ENCODE measurements at regions of chr12 and their contacts with region 1.

Region 1: DNA sequence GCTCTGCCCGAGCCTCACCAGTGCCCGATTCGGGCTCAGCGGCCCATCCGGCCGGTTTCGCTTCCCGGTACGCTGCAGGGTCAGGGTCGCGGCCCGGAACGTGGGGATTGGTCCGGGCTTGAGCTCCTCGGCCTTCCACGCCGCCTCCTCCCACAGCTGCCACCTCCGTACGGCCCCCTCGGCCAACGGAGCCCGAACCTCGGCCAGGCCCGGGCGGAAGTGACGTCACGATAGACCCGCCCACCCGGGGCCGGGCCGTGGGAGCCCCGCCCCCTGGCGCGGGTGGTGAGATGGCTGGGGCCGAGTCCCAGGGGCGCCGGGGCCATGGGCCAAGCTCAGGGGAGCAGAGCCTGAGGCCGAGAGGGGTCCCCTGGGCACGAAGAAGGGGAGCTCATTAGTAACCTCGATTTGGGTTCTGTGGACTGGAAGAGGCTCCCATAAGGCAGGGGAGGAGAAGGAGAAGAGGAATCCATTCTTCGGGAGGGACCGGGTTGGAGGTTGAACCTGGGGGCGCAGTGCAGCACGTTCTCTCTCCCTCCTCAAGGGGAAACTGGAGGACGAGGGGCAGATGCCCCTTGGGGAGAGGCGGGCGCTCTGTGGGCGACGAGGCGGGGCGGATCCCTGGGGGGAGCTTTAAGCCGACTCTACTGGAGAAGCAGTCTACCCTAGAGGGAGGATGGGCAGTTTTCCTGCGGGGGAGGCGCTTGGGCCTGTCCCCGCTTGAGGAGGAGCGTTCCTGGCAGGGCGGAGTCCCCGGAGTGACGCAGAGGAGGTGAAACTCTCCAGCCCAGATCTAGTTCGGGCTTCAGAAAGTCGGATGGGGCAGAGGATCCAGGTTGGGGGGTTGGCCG is at the start of gene MLF2:
- H3K4me3 Mint-ChIP-seq: peak within 1 kb of the TSS; percentile 99
- H3K27ac Mint-ChIP-seq: peak within 1 kb of the TSS; percentile 100
- H3K4me1 Mint-ChIP-seq: peaks cover 54% of the 10 kb centered on the region
- H3K27me3 Mint-ChIP-seq: peaks cover 7% of the 10 kb centered on the region

Region 2: DNA sequence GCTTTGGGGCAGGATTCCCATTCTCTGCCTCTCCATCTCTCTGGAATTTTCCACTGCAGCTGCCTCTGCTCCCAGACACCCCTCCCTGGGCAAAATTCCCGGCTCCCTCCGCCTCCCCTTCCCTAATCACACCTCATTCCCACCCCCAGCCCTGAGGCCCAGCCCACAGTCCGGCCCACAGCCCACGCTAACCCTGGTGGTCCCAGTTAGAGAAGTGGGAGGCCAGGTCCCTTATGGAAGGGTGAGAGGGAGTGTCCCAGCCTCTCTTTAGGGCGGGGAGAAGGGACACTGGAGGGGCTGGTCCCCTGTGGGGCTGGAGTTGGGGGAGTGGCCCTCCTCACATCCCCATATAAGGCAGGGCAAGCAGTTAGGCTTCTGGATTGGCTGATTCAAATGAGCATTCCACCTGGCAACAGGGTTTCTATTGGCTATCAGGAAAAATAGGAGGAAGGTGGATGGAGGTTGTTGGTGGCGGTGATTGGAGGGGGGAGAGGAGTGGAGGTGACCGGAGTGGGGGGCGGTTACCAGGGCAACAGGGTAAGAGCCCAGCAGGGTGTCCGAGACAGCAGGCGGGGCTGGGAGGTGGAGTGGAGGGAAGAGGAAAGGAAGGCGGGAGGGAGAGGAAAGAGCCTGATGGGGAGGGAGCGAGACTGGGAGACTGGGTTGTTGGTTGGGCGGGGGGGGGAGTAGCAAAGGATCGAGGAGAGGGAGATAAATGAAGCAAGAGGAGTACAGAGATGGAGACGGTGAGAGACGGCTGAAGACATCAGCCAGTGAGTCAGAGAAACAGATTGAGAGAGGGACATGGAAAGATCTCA is 11.1 kb after region 1 on chr12:
- intact Hi-C with region 1: loop called (anchors 1 kb)
- H3K4me3 Mint-ChIP-seq: peak overlapping the region; percentile 57
- H3K27ac Mint-ChIP-seq: peak overlapping the region; percentile 16
- H3K4me1 Mint-ChIP-seq: peaks cover 48% of the 10 kb centered on the region
- H3K27me3 Mint-ChIP-seq: peaks cover 52% of the 10 kb centered on the region

Region 3: GRCh38 chr12:6778574-6779550 is 25.7 kb after region 1 on chr12:
- intact Hi-C with region 1: loop called (anchors 1 kb)
- H3K4me3 Mint-ChIP-seq: peak overlapping the region; percentile 78
- H3K27ac Mint-ChIP-seq: peak overlapping the region; percentile 74
- H3K4me1 Mint-ChIP-seq: peaks cover 47% of the 10 kb centered on the region
- H3K27me3 Mint-ChIP-seq: peaks cover 49% of the 10 kb centered on the region

Region 4: GRCh38 chr12:6792522-6793201 is 39.5 kb after region 1 on chr12:
- intact Hi-C with region 1: loop called (anchors 5 kb)
- H3K4me3 Mint-ChIP-seq: peak overlapping the region; percentile 88
- H3K27ac Mint-ChIP-seq: peak overlapping the region; percentile 93
- H3K4me1 Mint-ChIP-seq: peaks cover 67% of the 10 kb centered on the region
- H3K27me3 Mint-ChIP-seq: no peaks in the 10 kb centered on the region